ENCODE measurements at regions of chr1 and their contacts with region 1.

Region 1: GRCh38 chr1:206725109-206725963 is 40.6 kb downstream of the MAPKAPK2 start:
- DNase-seq: peak in 8 of 9 experiments; percentile 34 to 78 (median 64)
- ATAC-seq: peak; percentile 57
- H3K4me3 ChIP-seq: no peak overlapping the region
- H3K4me3 Mint-ChIP-seq: peak overlapping the region; percentile 5
- H3K27ac ChIP-seq: no peak overlapping the region
- H3K27ac Mint-ChIP-seq: peak overlapping the region; percentile 25
- H3K4me1 ChIP-seq: peaks cover 27% of the 10 kb centered on the region
- H3K4me1 Mint-ChIP-seq: peaks cover 59% of the 10 kb centered on the region
- H3K27me3 ChIP-seq: no peaks in the 10 kb centered on the region
- H3K27me3 Mint-ChIP-seq: no peaks in the 10 kb centered on the region
- CTCF ChIP-seq: peak; percentile 47

Region 2: GRCh38 chr1:206684478-206685333 is 40.6 kb before region 1 on chr1 and contains the start of gene MAPKAPK2:
- CTCF ChIA-PET with region 1: interaction called, 20 read pairs
- POLR2A ChIA-PET with region 1: no interaction called
- intact Hi-C with region 1: loop called (anchors 2 to 5 kb)
- DNase-seq: peak; percentile 62 to 88 (median 76)
- ATAC-seq: peak; percentile 74
- H3K4me3 ChIP-seq: peak within 1 kb of the TSS; percentile 81 to 85
- H3K4me3 Mint-ChIP-seq: peak within 1 kb of the TSS; percentile 96
- H3K27ac ChIP-seq: peak within 1 kb of the TSS; percentile 76 to 88
- H3K27ac Mint-ChIP-seq: peak within 1 kb of the TSS; percentile 97
- H3K4me1 ChIP-seq: peaks cover 23% of the 10 kb centered on the region
- H3K4me1 Mint-ChIP-seq: peaks cover 39% of the 10 kb centered on the region
- H3K27me3 ChIP-seq: no peaks in the 10 kb centered on the region
- H3K27me3 Mint-ChIP-seq: no peaks in the 10 kb centered on the region
- CTCF ChIP-seq: no peak
- total RNA-seq, gene MAPKAPK2: 218 to 225 TPM

Region 3: DNA sequence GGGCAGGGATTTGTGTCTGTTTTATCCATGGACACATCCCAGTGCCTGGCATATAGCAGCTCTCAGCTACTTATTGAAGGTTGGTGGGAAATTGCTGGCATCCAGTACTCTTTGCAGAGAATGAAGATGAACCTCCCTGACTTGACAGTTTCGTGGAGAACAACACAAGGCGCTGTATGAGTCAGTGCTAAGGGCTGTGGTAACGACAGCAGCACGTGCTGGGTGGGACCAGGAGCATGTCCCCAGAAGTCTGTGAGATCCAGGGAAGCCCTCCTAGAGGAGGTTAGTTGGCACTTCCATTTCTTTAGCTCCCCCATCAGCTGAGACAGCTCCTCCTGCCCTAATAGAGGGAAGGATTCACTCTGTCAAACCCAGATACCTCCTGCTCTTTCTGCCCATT is 19.3 kb after region 1 on chr1:
- CTCF ChIA-PET with region 1: interaction called, 14 read pairs
- POLR2A ChIA-PET with region 1: no interaction called
- intact Hi-C with region 1: no loop called
- DNase-seq: peak in 1 of 9 experiments; percentile 50
- ATAC-seq: peak; percentile 45
- H3K4me3 ChIP-seq: no peak overlapping the region
- H3K4me3 Mint-ChIP-seq: no peak overlapping the region
- H3K27ac ChIP-seq: no peak overlapping the region
- H3K27ac Mint-ChIP-seq: peak overlapping the region; percentile 46
- H3K4me1 ChIP-seq: peaks cover 11% of the 10 kb centered on the region
- H3K4me1 Mint-ChIP-seq: peaks cover 40% of the 10 kb centered on the region
- H3K27me3 ChIP-seq: no peaks in the 10 kb centered on the region
- H3K27me3 Mint-ChIP-seq: no peaks in the 10 kb centered on the region
- CTCF ChIP-seq: no peak

Region 4: DNA sequence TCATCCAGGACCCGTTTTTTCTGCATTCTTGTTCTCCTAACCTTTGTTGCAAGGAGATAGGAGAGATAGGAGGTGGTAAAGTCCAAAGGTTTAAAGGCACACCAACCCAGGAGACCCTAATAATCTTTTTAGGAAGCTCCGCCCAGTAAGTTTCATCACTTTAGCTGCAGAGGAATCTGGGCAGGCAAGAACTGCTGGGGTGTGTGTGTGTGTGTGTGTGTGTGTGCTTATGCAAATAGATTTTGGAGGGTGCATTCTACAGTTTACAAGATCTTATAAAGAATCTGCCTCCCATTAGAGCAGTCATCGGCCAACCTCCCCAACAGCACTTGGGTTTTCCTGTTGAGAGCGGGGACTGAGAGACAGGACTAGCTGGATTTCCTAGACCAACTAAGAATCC is 50.9 kb after region 1 on chr1:
- CTCF ChIA-PET with region 1: interaction called, 10 read pairs
- POLR2A ChIA-PET with region 1: no interaction called
- intact Hi-C with region 1: no loop called
- DNase-seq: no peak
- ATAC-seq: no peak
- H3K4me3 ChIP-seq: no peak overlapping the region
- H3K4me3 Mint-ChIP-seq: no peak overlapping the region
- H3K27ac ChIP-seq: no peak overlapping the region
- H3K27ac Mint-ChIP-seq: no peak overlapping the region
- H3K4me1 ChIP-seq: peaks cover 34% of the 10 kb centered on the region
- H3K4me1 Mint-ChIP-seq: peaks cover 31% of the 10 kb centered on the region
- H3K27me3 ChIP-seq: no peaks in the 10 kb centered on the region
- H3K27me3 Mint-ChIP-seq: no peaks in the 10 kb centered on the region
- CTCF ChIP-seq: no peak

Region 5: GRCh38 chr1:206865013-206865671 is 139.8 kb after region 1 on chr1 and contains the start of gene IL20:
- CTCF ChIA-PET with region 1: interaction called, 15 read pairs
- POLR2A ChIA-PET with region 1: no interaction called
- intact Hi-C with region 1: no loop called
- DNase-seq: peak; percentile 72 to 93 (median 86)
- ATAC-seq: peak; percentile 97
- H3K4me3 ChIP-seq: no peak within 1 kb of the TSS
- H3K4me3 Mint-ChIP-seq: no peak within 1 kb of the TSS
- H3K27ac ChIP-seq: no peak within 1 kb of the TSS
- H3K27ac Mint-ChIP-seq: no peak within 1 kb of the TSS
- H3K4me1 ChIP-seq: peaks cover 7% of the 10 kb centered on the region
- H3K4me1 Mint-ChIP-seq: peaks cover 7% of the 10 kb centered on the region
- H3K27me3 ChIP-seq: no peaks in the 10 kb centered on the region
- H3K27me3 Mint-ChIP-seq: no peaks in the 10 kb centered on the region
- CTCF ChIP-seq: peak; percentile 91
- total RNA-seq, gene IL20: not detected

Region 6: GRCh38 chr1:206935491-206936067 is 210.2 kb after region 1 on chr1:
- CTCF ChIA-PET with region 1: interaction called, 60 read pairs
- POLR2A ChIA-PET with region 1: no interaction called
- intact Hi-C with region 1: loop called (anchors 1 kb)
- DNase-seq: peak in 6 of 9 experiments; percentile 41 to 65 (median 52)
- ATAC-seq: peak; percentile 45
- H3K4me3 ChIP-seq: no peak overlapping the region
- H3K4me3 Mint-ChIP-seq: no peak overlapping the region
- H3K27ac ChIP-seq: no peak overlapping the region
- H3K27ac Mint-ChIP-seq: no peak overlapping the region
- H3K4me1 ChIP-seq: peaks cover 20% of the 10 kb centered on the region
- H3K4me1 Mint-ChIP-seq: peaks cover 26% of the 10 kb centered on the region
- H3K27me3 ChIP-seq: no peaks in the 10 kb centered on the region
- H3K27me3 Mint-ChIP-seq: no peaks in the 10 kb centered on the region
- CTCF ChIP-seq: peak; percentile 48

Measured in CD8-positive, alpha-beta T cell (primary cell).